ENCODE measurements at regions of chr5 and their contacts with region 1.

Region 1: DNA sequence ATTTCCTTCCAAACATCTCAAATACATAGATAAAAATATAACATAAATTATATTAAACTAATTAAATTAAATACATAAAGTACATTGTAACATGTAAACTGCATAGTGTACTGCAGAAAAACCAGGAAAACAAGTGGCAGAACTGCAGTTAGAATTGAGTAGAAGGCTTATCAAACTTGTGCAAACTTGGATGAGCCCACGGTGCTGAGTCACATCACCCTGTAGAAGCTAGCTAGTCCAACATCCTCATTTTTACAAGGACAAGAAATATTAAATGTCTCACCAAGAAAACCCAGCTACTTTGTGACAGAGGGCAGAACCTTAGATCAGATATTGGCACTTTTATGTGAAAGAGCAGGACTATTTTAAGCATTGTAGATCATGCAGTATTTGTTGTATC is 807.9 kb upstream of the NUDT12 start:
- DNase-seq: peak; percentile 55
- ATAC-seq: peak; percentile 86
- H3K4me3 ChIP-seq: no peak overlapping the region
- H3K27ac ChIP-seq: no peak overlapping the region
- H3K4me1 ChIP-seq: peaks cover 17% of the 10 kb centered on the region
- H3K27me3 ChIP-seq: no peaks in the 10 kb centered on the region
- CTCF ChIP-seq: no peak

Region 2: DNA sequence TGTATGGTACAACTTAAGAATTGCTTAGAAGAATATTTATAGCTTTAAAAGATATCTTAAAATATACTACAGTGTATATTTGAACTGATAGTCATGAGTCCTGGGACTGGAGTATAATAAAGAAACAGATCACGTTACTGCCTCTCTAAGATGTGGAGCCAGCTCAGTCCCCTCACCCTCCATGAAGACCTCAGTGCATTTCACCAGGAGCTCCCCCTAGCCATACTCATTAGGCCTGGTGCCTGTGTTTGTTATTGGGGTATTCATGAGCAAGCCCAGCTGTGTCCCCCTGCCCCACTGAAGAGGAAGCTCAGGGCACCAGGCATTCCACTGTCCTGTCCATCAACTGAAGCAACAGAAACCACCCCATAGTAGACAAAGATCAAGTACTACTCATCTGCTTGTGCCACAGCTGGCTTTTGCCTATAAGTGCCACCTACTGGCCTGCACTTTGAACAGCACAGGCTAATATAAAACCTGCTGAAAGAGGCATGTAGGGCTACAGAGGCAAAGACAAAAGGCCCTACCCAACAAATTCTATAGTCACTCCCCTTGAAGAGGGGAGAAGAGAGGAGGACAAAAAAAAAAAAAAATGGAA is 42.2 kb after region 1 on chr5:
- CTCF ChIA-PET with region 1: no interaction called
- POLR2A ChIA-PET with region 1: no interaction called
- intact Hi-C with region 1: loop called (anchors 5 kb)
- DNase-seq: peak; percentile 64
- ATAC-seq: peak; percentile 64
- H3K4me3 ChIP-seq: no peak overlapping the region
- H3K27ac ChIP-seq: no peak overlapping the region
- H3K4me1 ChIP-seq: peaks cover 13% of the 10 kb centered on the region
- H3K27me3 ChIP-seq: no peaks in the 10 kb centered on the region
- CTCF ChIP-seq: peak; percentile 79

Region 3: DNA sequence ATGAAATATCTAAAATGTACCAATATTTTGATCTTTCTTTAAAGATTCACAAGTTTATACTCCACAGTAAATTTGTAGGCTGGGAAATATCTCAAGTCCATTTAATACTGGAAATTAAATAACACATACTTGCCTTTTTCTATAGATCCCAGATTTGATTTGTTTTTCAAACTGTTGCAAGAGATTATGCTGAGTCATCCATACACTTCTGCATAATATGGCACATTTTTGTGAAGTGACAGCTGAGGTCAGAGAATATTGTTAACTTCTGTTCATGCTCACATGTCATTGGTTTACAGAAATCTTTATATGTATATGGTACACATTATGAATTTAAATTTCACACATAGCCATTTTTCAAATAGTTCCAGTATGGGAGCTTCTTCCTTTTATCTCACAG is 258.4 kb after region 1 on chr5:
- CTCF ChIA-PET with region 1: no interaction called
- POLR2A ChIA-PET with region 1: no interaction called
- intact Hi-C with region 1: no loop called
- DNase-seq: peak; percentile 19
- ATAC-seq: no peak
- H3K4me3 ChIP-seq: no peak overlapping the region
- H3K27ac ChIP-seq: no peak overlapping the region
- H3K4me1 ChIP-seq: peaks cover 4% of the 10 kb centered on the region; the same call in 1 of the 2 replicates
- H3K27me3 ChIP-seq: no peaks in the 10 kb centered on the region
- CTCF ChIP-seq: no peak

Region 4: GRCh38 chr5:104661256-104661655 is 290.7 kb after region 1 on chr5:
- CTCF ChIA-PET with region 1: no interaction called
- POLR2A ChIA-PET with region 1: no interaction called
- intact Hi-C with region 1: loop called (anchors 10 kb)
- DNase-seq: no peak
- ATAC-seq: peak; percentile 41
- H3K4me3 ChIP-seq: no peak overlapping the region
- H3K27ac ChIP-seq: no peak overlapping the region
- H3K4me1 ChIP-seq: no peaks in the 10 kb centered on the region
- H3K27me3 ChIP-seq: no peaks in the 10 kb centered on the region
- CTCF ChIP-seq: no peak

Region 5: DNA sequence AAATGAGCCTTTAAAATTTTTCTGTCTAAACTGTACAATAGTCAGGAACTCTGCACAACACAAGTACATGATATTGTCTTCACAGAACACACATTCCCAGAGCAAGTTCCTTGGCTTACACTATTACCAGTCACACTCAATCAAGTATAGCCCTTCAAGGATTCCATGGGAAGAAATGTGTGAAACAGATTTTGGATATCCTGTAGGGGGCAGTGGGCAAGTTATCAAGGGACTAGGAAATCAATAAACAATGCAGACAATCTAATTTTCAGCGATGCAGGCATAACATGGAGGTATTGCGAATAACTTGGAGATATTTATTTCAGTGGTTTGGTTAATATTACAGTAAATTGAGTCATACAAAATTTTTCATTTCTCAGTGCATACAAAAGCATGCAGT is 363.5 kb after region 1 on chr5:
- CTCF ChIA-PET with region 1: no interaction called
- POLR2A ChIA-PET with region 1: no interaction called
- intact Hi-C with region 1: no loop called
- DNase-seq: no peak
- ATAC-seq: no peak
- H3K4me3 ChIP-seq: no peak overlapping the region
- H3K27ac ChIP-seq: no peak overlapping the region
- H3K4me1 ChIP-seq: peaks cover 8% of the 10 kb centered on the region; the same call in 1 of the 2 replicates
- H3K27me3 ChIP-seq: no peaks in the 10 kb centered on the region
- CTCF ChIP-seq: peak; percentile 49